ENCODE measurements at regions of chr17 and their contacts with region 1.

Region 1: GRCh38 chr17:77054936-77055335 is 85.8 kb upstream of the SEC14L1 start:
- DNase-seq: no peak
- ATAC-seq: peak; percentile 27 to 39; a peak in 5 of 6 replicates
- H3K4me3 ChIP-seq: no peak overlapping the region
- H3K27ac ChIP-seq: peak overlapping the region; percentile 26 to 86; a peak in 5 of 6 replicates
- H3K4me1 ChIP-seq: peaks cover 14% of the 10 kb centered on the region
- CTCF ChIP-seq: no peak
- EP300 ChIP-seq: no peak
- POLR2A ChIP-seq: no peak
- RAD21 ChIP-seq: no peak

Region 2: GRCh38 chr17:76797241-76797840 is 257.6 kb before region 1 on chr17:
- CTCF ChIA-PET with region 1: interaction called, 20 read pairs
- POLR2A ChIA-PET with region 1: no interaction called
- DNase-seq: no peak
- ATAC-seq: no peak
- H3K4me3 ChIP-seq: no peak overlapping the region
- H3K27ac ChIP-seq: no peak overlapping the region
- H3K4me1 ChIP-seq: peaks cover 6% of the 10 kb centered on the region; the same call in 1 of the 3 replicates
- CTCF ChIP-seq: no peak
- EP300 ChIP-seq: no peak
- POLR2A ChIP-seq: no peak
- RAD21 ChIP-seq: no peak

Region 3: GRCh38 chr17:76852843-76853242 is 202.1 kb before region 1 on chr17:
- CTCF ChIA-PET with region 1: interaction called, 23 read pairs
- POLR2A ChIA-PET with region 1: no interaction called
- DNase-seq: no peak
- ATAC-seq: no peak
- H3K4me3 ChIP-seq: no peak overlapping the region
- H3K27ac ChIP-seq: no peak overlapping the region
- H3K4me1 ChIP-seq: peaks cover 9% of the 10 kb centered on the region; the same call in 1 of the 3 replicates
- CTCF ChIP-seq: no peak
- EP300 ChIP-seq: no peak
- POLR2A ChIP-seq: no peak
- RAD21 ChIP-seq: no peak

Region 4: GRCh38 chr17:76893623-76894334 is 161.2 kb before region 1 on chr17:
- CTCF ChIA-PET with region 1: interaction called, 42 read pairs
- POLR2A ChIA-PET with region 1: no interaction called
- DNase-seq: no peak
- ATAC-seq: no peak
- H3K4me3 ChIP-seq: no peak overlapping the region
- H3K27ac ChIP-seq: no peak overlapping the region
- H3K4me1 ChIP-seq: no peaks in the 10 kb centered on the region
- CTCF ChIP-seq: no peak
- EP300 ChIP-seq: no peak
- POLR2A ChIP-seq: no peak
- RAD21 ChIP-seq: no peak

Region 5: DNA sequence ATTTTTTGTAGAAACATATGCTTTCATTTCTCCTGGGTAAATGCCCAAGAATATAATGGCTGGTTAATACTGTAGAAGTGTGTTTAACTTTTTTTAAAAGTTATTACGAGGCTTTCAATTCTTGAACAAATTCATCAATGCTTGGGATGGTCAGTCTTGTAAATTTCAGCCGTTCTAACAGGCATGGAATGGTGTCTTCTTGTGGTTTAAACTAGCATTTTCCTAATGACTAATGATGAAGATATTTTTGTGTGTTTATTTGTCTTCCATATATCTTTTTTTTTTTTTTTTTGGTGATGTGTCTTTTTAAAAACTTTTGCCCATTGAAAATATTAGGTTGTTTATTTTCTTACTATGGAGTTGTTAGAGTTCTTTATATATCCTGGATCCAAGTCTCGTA is 119.6 kb before region 1 on chr17:
- CTCF ChIA-PET with region 1: interaction called, 16 read pairs
- POLR2A ChIA-PET with region 1: no interaction called
- DNase-seq: no peak
- ATAC-seq: no peak
- H3K4me3 ChIP-seq: no peak overlapping the region
- H3K27ac ChIP-seq: peak overlapping the region in 1 of 2 experiments; percentile 55; a peak in 3 of 6 replicates
- H3K4me1 ChIP-seq: peaks cover 14% of the 10 kb centered on the region
- CTCF ChIP-seq: no peak
- EP300 ChIP-seq: no peak
- POLR2A ChIP-seq: no peak
- RAD21 ChIP-seq: no peak

Region 6: GRCh38 chr17:76989519-76989918 is 65.4 kb before region 1 on chr17:
- CTCF ChIA-PET with region 1: interaction called, 18 read pairs
- POLR2A ChIA-PET with region 1: no interaction called
- DNase-seq: no peak
- ATAC-seq: no peak
- H3K4me3 ChIP-seq: no peak overlapping the region
- H3K27ac ChIP-seq: peak overlapping the region in 1 of 2 experiments; percentile 58; a peak in 3 of 6 replicates
- H3K4me1 ChIP-seq: peaks cover 7% of the 10 kb centered on the region; the same call in 2 of the 3 replicates
- CTCF ChIP-seq: no peak
- EP300 ChIP-seq: no peak
- POLR2A ChIP-seq: no peak
- RAD21 ChIP-seq: no peak

Region 7: DNA sequence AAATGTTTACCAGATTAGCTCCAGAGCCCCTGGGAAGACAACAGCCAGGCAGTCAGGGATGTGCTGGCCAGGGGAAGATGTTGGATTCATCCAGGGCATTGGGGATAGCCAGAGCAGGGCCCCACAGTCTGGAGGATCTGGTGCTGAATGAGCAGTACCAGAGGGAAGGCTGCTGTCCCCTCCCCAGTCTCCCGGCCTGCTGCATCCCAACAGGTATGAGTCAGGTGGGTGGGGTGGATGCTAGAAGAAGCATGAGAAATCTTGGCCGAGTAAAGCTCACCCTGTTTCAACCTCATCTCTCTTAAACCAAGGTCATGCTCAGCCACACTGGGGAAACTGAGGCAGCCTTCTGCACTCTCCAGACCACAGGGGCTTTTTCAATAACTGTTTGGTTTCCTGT is 14.0 kb after region 1 on chr17:
- CTCF ChIA-PET with region 1: interaction called, 141 read pairs
- POLR2A ChIA-PET with region 1: no interaction called
- DNase-seq: no peak
- ATAC-seq: peak in 1 of 2 experiments; percentile 21; a peak in 2 of 6 replicates
- H3K4me3 ChIP-seq: no peak overlapping the region
- H3K27ac ChIP-seq: peak overlapping the region in 1 of 2 experiments; percentile 6; a peak in 1 of 6 replicates
- H3K4me1 ChIP-seq: peaks cover 5% of the 10 kb centered on the region; the same call in 1 of the 3 replicates
- CTCF ChIP-seq: no peak
- EP300 ChIP-seq: no peak
- POLR2A ChIP-seq: no peak
- RAD21 ChIP-seq: no peak

Measured in A549 (cell line).